Naive thymus-derived CD4-positive, alpha-beta T cell (primary cell): ENCODE measurements at regions of chr12 and their contacts with region 1.

Region 1: DNA sequence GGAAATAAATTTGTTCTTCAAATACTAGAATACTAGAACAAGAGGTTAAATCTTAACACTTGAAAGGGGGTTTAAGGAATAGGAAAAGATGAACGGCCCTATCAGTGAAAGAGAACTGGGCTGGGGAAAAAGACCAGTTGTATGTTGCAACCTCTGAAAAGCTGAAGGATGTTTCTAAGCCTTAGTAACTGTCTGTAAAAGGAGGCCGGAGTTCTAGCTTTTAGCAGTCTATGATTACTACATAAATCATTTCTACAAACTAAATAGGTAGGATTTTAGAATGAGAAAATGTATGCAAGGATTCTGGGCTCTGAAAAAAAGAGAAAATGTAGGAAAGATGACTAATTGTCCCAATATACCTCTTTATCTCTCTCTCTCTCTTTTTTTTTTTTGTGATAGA is 4.9 kb downstream of the CERS5 start:
- DNase-seq: no peak
- ATAC-seq: no peak
- H3K4me3 ChIP-seq: no peak overlapping the region
- H3K4me3 Mint-ChIP-seq: no peak overlapping the region
- H3K27ac ChIP-seq: no peak overlapping the region
- H3K27ac Mint-ChIP-seq: peak overlapping the region in 1 of 9 donors; percentile 31
- H3K4me1 ChIP-seq: peaks cover 7 to 13% of the 10 kb centered on the region in 2 donors
- H3K4me1 Mint-ChIP-seq: peaks cover 35 to 61% (median 54%) of the 10 kb centered on the region in 7 donors
- H3K27me3 ChIP-seq: no peaks in the 10 kb centered on the region
- H3K27me3 Mint-ChIP-seq: no peaks in the 10 kb centered on the region

Region 2: DNA sequence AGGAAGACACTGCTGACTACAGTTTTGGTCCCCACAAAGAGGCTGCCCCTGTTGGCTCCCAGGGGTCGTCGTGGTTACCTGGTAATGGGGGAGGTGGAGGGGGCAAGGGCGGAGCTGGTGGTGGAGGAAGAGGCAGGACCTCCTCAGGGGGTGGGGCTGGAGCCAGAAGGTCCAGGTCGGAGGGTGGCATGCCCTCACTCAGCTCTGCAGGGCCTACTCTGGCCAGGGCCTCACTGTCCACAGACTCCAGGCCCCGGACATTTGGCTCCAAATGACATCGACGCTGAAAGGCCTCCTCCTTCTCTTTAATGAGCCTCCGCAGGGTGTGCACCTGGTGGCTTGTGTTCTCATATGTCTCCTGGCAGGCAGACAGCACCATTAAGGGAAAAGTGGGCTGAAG is 510.4 kb before region 1 on chr12:
- CTCF ChIA-PET with region 1: no interaction called
- POLR2A ChIA-PET with region 1: no interaction called
- intact Hi-C with region 1: no loop called
- DNase-seq: no peak
- ATAC-seq: no peak
- H3K4me3 ChIP-seq: no peak overlapping the region
- H3K4me3 Mint-ChIP-seq: no peak overlapping the region
- H3K27ac ChIP-seq: no peak overlapping the region
- H3K27ac Mint-ChIP-seq: peak overlapping the region in 7 of 9 donors; percentile 27 to 88 (median 62)
- H3K4me1 ChIP-seq: peaks cover 0 to 16% of the 10 kb centered on the region in 2 donors
- H3K4me1 Mint-ChIP-seq: peaks cover 26 to 59% (median 49%) of the 10 kb centered on the region in 7 donors
- H3K27me3 ChIP-seq: no peaks in the 10 kb centered on the region
- H3K27me3 Mint-ChIP-seq: no peaks in the 10 kb centered on the region

Region 3: GRCh38 chr12:50151047-50151687 is 11.1 kb before region 1 on chr12:
- CTCF ChIA-PET with region 1: interaction called, 3 read pairs
- POLR2A ChIA-PET with region 1: interaction called, 12 read pairs
- intact Hi-C with region 1: loop called in 1 of 2 experiments (anchors 2 kb)
- DNase-seq: no peak
- ATAC-seq: no peak
- H3K4me3 ChIP-seq: no peak overlapping the region
- H3K4me3 Mint-ChIP-seq: no peak overlapping the region
- H3K27ac ChIP-seq: no peak overlapping the region
- H3K27ac Mint-ChIP-seq: peak overlapping the region in 7 of 9 donors; percentile 2 to 60 (median 14)
- H3K4me1 ChIP-seq: no peaks in the 10 kb centered on the region
- H3K4me1 Mint-ChIP-seq: peaks cover 3 to 26% (median 18%) of the 10 kb centered on the region in 7 donors
- H3K27me3 ChIP-seq: no peaks in the 10 kb centered on the region
- H3K27me3 Mint-ChIP-seq: no peaks in the 10 kb centered on the region